GM18951 (cell line): ENCODE measurements at regions of chr4 and their contacts with region 1.

Region 1: DNA sequence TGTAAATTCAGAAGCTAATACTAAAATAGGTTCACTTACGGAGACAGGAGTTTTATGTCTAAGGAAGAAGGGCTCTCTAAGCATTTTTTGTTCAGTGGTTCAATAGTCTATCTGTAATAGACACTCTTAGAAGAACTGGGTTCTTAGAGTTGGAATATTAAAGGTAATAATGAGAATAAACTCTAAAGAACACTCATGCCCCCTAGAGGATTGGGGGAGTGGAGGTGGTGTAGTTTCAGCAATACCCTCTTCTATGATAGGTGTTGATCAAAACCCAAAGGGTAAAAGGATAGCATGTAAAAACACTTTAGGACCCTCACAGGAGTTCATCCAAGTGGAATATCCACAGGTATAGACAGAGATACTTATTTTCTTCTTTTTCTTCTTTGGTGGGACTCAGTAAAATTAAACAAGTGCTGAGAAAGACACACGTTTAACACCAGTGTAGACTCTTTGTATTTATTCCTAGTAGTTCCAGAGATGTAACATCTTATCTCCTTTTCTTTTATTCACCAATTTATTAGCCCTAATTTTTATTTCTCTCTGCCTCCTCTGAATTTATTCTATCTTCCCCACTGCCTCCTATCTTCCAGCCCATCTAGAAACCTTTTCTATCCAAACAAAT is 25.7 kb upstream of the MND1 start:
- POLR2A ChIP-seq: no peak

Region 2: GRCh38 chr4:153159728-153160221 is 159.0 kb before region 1 on chr4:
- in situ Hi-C with region 1: loop called (anchors 10 kb)
- POLR2A ChIP-seq: no peak